ENCODE measurements at regions of chr14 and their contacts with region 1.

Region 1: GRCh38 chr14:73526569-73526968 is 10.4 kb upstream of the ACOT1 start:
- DNase-seq: no peak
- ATAC-seq: no peak
- H3K4me3 Mint-ChIP-seq: no peak overlapping the region
- H3K27ac Mint-ChIP-seq: no peak overlapping the region
- H3K4me1 Mint-ChIP-seq: no peaks in the 10 kb centered on the region
- H3K27me3 Mint-ChIP-seq: no peaks in the 10 kb centered on the region
- CTCF ChIP-seq: no peak

Region 2: GRCh38 chr14:73553845-73554244 is 27.3 kb after region 1 on chr14:
- CTCF ChIA-PET with region 1: no interaction called
- POLR2A ChIA-PET with region 1: no interaction called
- intact Hi-C with region 1: loop called (anchors 2 kb)
- DNase-seq: no peak
- ATAC-seq: no peak
- H3K4me3 Mint-ChIP-seq: no peak overlapping the region
- H3K27ac Mint-ChIP-seq: no peak overlapping the region
- H3K4me1 Mint-ChIP-seq: peaks cover 2% of the 10 kb centered on the region
- H3K27me3 Mint-ChIP-seq: no peaks in the 10 kb centered on the region
- CTCF ChIP-seq: no peak

Measured in activated B cell treated with CpG ODN at 0.5 μM for 24 hours (primary cell).